Activated CD4-positive, alpha-beta memory T cell treated with anti-CD3 and anti-CD28 coated beads for 36 hours (primary cell): ENCODE measurements at regions of chr2 and their contacts with region 1.

Region 1: GRCh38 chr2:196200557-196200956 is 29.2 kb upstream of the STK17B start:
- DNase-seq: peak; percentile 61
- H3K4me3 Mint-ChIP-seq: peak overlapping the region; percentile 64
- H3K27ac Mint-ChIP-seq: peak overlapping the region; percentile 82
- H3K4me1 Mint-ChIP-seq: peaks cover 52% of the 10 kb centered on the region
- H3K27me3 Mint-ChIP-seq: no peaks in the 10 kb centered on the region

Region 2: DNA sequence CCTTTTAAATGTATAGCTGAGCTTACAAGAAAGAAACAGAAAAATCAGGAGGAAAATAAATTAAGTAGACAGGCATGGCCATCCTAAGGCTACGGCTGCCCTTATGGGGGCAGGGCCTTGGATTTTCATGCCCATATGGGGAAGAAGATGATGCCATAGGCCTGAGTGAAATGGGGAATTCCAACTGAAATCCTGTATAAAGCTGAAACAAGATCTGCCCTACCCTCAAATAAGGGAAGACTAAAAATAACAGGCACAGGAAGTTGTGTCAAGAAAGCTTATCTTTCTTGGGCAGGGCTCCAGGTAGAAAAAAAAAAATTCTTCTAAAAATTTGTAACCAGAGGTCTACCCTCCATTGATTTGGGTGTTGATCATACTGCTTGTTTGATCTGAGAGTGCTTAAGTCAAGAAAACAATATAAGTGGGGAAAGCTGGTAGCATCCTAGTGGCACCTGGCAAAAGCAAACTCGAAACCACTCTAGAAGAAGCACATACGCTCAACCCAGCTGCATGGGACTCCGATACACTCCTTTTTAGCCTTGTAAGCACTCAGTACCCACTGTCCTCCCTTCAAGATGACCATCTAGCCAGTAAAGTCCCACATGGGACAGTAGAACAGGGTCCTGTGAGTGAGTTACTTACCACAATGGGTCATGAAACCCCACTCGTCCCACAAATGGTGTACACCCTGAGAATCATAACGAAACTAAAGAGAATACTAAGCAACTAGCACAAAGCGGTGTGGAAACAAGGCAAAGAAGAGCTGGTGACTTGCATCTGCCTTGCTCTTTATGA is 154.2 kb before region 1 on chr2:
- CTCF ChIA-PET with region 1: no interaction called
- POLR2A ChIA-PET with region 1: no interaction called
- intact Hi-C with region 1: no loop called
- DNase-seq: no peak
- H3K4me3 Mint-ChIP-seq: no peak overlapping the region
- H3K27ac Mint-ChIP-seq: no peak overlapping the region
- H3K4me1 Mint-ChIP-seq: no peaks in the 10 kb centered on the region
- H3K27me3 Mint-ChIP-seq: peaks cover 4% of the 10 kb centered on the region

Region 3: GRCh38 chr2:196182439-196183171 is 18.0 kb before region 1 on chr2:
- CTCF ChIA-PET with region 1: interaction called, 8 read pairs
- POLR2A ChIA-PET with region 1: interaction called, 5 read pairs
- intact Hi-C with region 1: loop called (anchors 1 kb)
- DNase-seq: no peak
- H3K4me3 Mint-ChIP-seq: peak overlapping the region; percentile 75
- H3K27ac Mint-ChIP-seq: peak overlapping the region; percentile 88
- H3K4me1 Mint-ChIP-seq: peaks cover 77% of the 10 kb centered on the region
- H3K27me3 Mint-ChIP-seq: no peaks in the 10 kb centered on the region

Region 4: GRCh38 chr2:196230061-196230854 is 29.7 kb after region 1 on chr2:
- CTCF ChIA-PET with region 1: no interaction called
- POLR2A ChIA-PET with region 1: no interaction called
- intact Hi-C with region 1: no loop called
- DNase-seq: peak; percentile 66
- H3K4me3 Mint-ChIP-seq: peak overlapping the region; percentile 70
- H3K27ac Mint-ChIP-seq: peak overlapping the region; percentile 88
- H3K4me1 Mint-ChIP-seq: peaks cover 90% of the 10 kb centered on the region
- H3K27me3 Mint-ChIP-seq: no peaks in the 10 kb centered on the region

Region 5: GRCh38 chr2:196808083-196808665 is 607.6 kb after region 1 on chr2:
- CTCF ChIA-PET with region 1: no interaction called
- POLR2A ChIA-PET with region 1: no interaction called
- intact Hi-C with region 1: no loop called
- DNase-seq: no peak
- H3K4me3 Mint-ChIP-seq: no peak overlapping the region
- H3K27ac Mint-ChIP-seq: no peak overlapping the region
- H3K4me1 Mint-ChIP-seq: no peaks in the 10 kb centered on the region
- H3K27me3 Mint-ChIP-seq: peaks cover 27% of the 10 kb centered on the region